ENCODE measurements at regions of chr2 and their contacts with region 1.

Region 1: DNA sequence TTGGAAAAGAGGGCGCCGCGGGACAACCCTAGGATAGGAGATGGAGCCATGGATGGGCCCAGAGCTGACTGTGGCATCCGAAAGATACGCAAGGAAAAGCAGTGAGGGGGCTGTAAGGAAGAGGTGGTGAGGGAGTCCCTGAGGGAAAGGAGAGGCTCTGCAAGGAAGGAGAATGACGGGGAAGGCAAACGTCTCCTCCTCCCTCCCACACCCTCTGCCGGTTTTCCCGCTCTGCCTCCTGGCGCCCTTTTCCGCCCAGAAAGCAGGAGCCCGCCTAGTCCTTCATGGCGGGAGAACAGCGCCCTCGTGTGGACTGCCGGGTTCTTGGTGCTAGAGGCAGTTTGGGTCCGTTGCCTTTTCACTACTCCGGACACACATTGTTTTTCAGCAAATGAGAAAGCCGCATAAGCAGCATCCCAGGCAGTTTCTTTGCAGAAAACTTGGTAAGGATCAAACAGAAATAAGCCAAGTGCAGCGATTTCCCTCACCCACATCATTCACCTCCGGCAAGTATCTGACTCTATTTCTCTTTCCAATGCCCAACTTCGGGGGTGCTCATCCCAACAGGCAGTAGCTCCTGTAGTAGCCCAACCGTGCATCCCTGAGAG is 200.4 kb downstream of the INO80D start:
- DNase-seq: peak; percentile 89
- H3K4me3 ChIP-seq: no peak overlapping the region
- H3K27ac ChIP-seq: peak overlapping the region in 1 of 4 donors; percentile 13
- H3K4me1 ChIP-seq: peaks cover 0 to 8% (median 0%) of the 10 kb centered on the region in 4 donors
- H3K27me3 ChIP-seq: no peaks in the 10 kb centered on the region
- CTCF ChIP-seq: peak; percentile 81 to 91 (median 86)
- EP300 ChIP-seq: no peak
- POLR2A ChIP-seq: no peak

Region 2: DNA sequence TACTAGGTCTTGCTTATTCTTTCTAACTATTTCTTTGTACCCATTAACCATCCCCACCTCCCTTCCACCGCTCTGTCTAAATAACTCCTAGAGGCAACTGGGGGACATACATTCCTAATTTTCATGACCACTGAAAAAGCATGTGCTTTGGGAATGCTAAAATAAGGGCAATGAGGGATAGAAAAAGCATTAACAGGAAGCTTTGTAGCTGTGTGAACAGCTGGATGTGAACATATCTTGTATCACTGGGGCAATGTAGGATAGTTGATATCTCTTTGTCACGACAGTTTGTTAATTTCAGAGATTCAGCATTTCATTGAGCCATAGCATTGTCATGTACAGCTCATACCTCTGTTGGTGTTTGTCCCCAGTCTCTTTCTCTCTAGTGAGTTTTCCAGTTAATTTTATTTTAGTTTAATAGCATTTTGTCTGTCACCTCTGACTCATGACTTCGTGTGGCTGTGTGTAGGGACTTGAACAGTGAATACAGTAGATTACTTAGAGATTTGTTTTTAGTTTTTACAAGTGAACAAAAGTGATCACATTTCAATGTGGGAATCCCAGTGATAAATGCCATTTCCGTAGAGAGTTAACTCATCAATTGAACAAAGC is 433.6 kb before region 1 on chr2:
- in situ Hi-C with region 1: no loop called
- intact Hi-C with region 1: no loop called
- DNase-seq: no peak
- H3K4me3 ChIP-seq: no peak overlapping the region
- H3K27ac ChIP-seq: no peak overlapping the region
- H3K4me1 ChIP-seq: no peaks in the 10 kb centered on the region
- H3K27me3 ChIP-seq: no peaks in the 10 kb centered on the region
- CTCF ChIP-seq: no peak
- EP300 ChIP-seq: no peak
- POLR2A ChIP-seq: no peak

Region 3: DNA sequence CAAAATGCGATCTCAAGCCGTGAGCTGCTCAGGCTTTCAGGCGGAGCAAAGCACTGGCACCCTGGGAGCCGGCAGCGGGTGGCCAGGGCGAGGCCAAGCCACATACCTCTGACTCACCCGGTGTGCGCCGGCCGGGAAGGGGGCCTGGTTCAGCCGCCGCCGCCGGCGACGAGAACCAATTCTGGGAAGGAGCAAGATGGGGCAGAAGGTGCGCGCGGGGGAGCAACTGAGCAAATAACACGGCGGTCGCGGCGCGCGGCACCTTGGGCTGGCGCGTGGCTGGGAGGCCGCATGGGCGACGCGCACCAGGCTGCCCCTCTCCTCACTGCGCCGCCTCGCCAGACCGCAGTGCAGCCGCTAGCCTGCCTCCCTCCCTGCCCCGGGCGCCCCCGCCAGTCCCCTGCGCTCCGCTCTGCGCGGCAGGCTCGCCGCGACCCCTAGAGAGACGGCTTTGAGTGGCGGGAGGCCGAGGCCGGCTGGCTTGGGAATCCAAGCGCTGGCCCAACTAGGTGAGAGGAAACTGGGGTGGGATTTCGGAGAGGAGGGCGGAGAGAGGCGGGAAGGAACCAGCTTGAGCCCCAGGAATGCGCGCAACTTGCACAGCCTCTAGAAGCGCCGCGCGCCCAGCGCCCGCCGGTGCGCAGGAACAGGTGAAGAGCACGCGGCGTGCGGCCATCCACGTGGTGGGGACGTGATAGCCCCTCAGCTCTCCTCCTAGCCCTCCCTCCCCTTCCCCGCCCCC is 200.1 kb before region 1 on chr2:
- in situ Hi-C with region 1: no loop called
- intact Hi-C with region 1: loop called (anchors 2 kb)
- DNase-seq: no peak
- H3K4me3 ChIP-seq: peak overlapping the region; percentile 57 to 69 (median 58)
- H3K27ac ChIP-seq: peak overlapping the region; percentile 82 to 95 (median 88)
- H3K4me1 ChIP-seq: peaks cover 0 to 68% (median 9%) of the 10 kb centered on the region in 4 donors
- H3K27me3 ChIP-seq: peaks cover 62% of the 10 kb centered on the region
- CTCF ChIP-seq: no peak
- EP300 ChIP-seq: no peak
- POLR2A ChIP-seq: no peak

Region 4: DNA sequence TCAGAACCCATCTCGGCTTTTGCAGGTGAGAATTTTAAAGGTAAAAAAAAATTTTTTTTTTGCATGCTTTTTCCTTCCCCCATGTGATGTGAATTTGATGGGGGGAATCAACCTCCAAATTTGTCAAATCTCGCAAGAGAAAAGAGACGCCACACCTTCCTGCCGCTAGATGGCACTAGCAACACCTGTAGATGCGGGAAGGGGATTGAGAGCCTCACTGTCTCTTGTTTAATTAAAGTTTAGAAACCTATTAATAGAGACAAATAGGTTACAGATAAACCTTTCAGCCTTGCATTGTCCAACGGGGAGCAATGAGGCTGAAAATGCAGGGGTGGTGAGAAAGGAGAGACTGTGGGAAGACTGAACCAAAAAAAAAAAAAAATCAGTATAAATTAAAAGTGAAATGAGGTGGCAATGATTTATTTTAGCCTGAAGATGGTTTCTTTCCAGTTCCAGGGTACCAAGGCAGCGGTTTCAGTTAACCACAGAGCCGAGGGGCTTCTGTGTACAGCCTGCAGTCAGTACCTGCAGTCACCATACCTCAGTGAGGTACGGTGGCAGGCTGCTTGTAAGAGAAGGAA is 118.7 kb before region 1 on chr2:
- in situ Hi-C with region 1: loop called in 3 of 4 experiments (anchors 10 kb)
- intact Hi-C with region 1: loop called (anchors 2 kb)
- DNase-seq: peak; percentile 68
- H3K4me3 ChIP-seq: no peak overlapping the region
- H3K27ac ChIP-seq: peak overlapping the region; percentile 68 to 86 (median 74)
- H3K4me1 ChIP-seq: peaks cover 38 to 80% (median 53%) of the 10 kb centered on the region in 4 donors
- H3K27me3 ChIP-seq: no peaks in the 10 kb centered on the region
- CTCF ChIP-seq: peak; percentile 80 to 93 (median 89)
- EP300 ChIP-seq: no peak
- POLR2A ChIP-seq: no peak

Region 5: GRCh38 chr2:205776139-205776538 is 109.5 kb before region 1 on chr2:
- in situ Hi-C with region 1: loop called in 3 of 4 experiments (anchors 10 kb)
- intact Hi-C with region 1: no loop called
- DNase-seq: peak; percentile 58
- H3K4me3 ChIP-seq: no peak overlapping the region
- H3K27ac ChIP-seq: peak overlapping the region; percentile 19 to 86 (median 66)
- H3K4me1 ChIP-seq: peaks cover 2 to 22% (median 12%) of the 10 kb centered on the region in 4 donors
- H3K27me3 ChIP-seq: no peaks in the 10 kb centered on the region
- CTCF ChIP-seq: peak; percentile 54 to 63 (median 57)
- EP300 ChIP-seq: no peak
- POLR2A ChIP-seq: no peak

Region 6: GRCh38 chr2:206045251-206045650 is 159.7 kb after region 1 on chr2:
- in situ Hi-C with region 1: no loop called
- intact Hi-C with region 1: no loop called
- DNase-seq: no peak
- H3K4me3 ChIP-seq: no peak overlapping the region
- H3K27ac ChIP-seq: no peak overlapping the region
- H3K4me1 ChIP-seq: peaks cover 0 to 21% (median 19%) of the 10 kb centered on the region in 4 donors
- H3K27me3 ChIP-seq: no peaks in the 10 kb centered on the region
- CTCF ChIP-seq: no peak
- EP300 ChIP-seq: no peak
- POLR2A ChIP-seq: no peak

Measured in transverse colon (tissue), 4 donors.